ENCODE measurements at regions of chr5 and their contacts with region 1.

Region 1: DNA sequence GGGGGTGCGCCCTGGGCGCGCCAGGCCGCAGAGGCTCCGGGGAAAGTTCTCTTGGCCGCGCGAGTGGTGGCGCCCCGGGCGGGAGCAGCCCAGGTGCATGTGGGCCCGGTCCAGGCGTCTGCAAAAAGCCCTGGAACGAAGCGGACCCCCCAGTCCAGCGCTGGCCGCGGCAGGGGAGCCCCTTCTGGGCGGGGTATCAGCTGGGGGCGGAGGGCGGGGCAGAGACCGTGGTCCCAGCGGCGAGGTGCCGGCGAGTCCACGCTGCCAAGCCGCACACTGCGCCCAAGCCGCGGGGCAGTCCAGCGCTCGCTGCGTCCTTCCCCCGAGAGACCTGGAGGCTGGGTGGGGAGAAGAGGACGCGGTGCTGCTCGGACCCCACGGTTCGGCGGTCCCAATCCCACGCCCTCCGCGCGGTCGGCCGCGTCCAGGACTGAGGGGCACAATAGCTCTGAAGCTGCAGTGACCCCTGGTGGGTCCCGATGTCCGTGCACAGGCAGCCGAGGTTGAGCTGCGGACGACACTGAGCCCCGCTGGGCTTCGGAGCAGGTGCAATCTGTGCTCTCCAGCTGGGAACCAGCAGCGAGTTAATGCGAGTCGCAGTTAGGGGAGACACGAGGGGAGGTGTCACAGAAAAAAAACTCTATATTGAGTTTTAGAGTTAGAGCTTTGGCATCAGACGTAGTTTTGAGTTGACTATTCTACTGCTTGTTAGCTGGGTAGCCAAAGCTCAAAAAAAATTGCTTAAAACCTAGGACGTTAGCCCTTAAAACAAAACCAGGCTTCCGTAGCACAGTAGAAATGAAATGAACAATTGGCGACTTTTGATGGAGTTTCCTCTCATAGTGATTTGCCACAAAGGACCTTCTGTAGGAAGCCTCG is 1.1 kb upstream of the EPB41L4A start:
- DNase-seq: peak; percentile 79
- H3K4me3 Mint-ChIP-seq: peak overlapping the region; percentile 82
- H3K27ac Mint-ChIP-seq: no peak overlapping the region
- H3K4me1 Mint-ChIP-seq: peaks cover 13% of the 10 kb centered on the region
- H3K27me3 Mint-ChIP-seq: peaks cover 56% of the 10 kb centered on the region

Region 2: GRCh38 chr5:112174959-112175594 is 245.1 kb before region 1 on chr5:
- intact Hi-C with region 1: loop called (anchors 2 kb)
- DNase-seq: peak; percentile 75
- H3K4me3 Mint-ChIP-seq: no peak overlapping the region
- H3K27ac Mint-ChIP-seq: no peak overlapping the region
- H3K4me1 Mint-ChIP-seq: no peaks in the 10 kb centered on the region
- H3K27me3 Mint-ChIP-seq: peaks cover 22% of the 10 kb centered on the region

Measured in activated CD4-positive, alpha-beta T cell treated with anti-CD3 and anti-CD28 coated beads, Interleukin-2, amount 10 ng/mL, durations not matched to agents 24 days and 14 days (primary cell).